Lower leg skin (tissue), 4 donors: ENCODE measurements at regions of chr1 and their contacts with region 1.

Region 1: DNA sequence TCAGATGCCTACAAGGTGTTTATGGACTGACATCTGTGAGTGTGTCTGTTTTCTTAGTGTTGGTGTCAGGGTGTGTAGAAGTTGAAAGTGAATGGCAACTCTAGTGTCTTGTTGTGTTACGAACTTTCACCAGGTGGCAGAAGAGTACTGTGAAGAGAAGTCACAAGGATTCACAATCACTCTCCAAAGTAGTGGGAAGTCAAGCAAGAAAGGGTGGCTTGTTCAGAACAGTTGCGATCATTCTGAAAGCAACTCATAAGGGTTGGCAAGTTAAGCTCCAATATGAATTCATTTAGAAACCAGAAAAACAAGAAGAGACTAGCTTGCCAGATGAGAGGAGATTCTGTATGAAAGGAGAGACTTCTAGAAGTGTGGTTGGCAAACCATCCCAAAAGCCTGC is 86.1 kb downstream of the FASLG start:
- DNase-seq: peak in 1 of 2 donors; percentile 45
- H3K4me3 ChIP-seq: no peak overlapping the region
- CTCF ChIP-seq: no peak
- POLR2A ChIP-seq: no peak

Region 2: GRCh38 chr1:173195596-173196088 is 450.6 kb after region 1 on chr1:
- intact Hi-C with region 1: loop called (anchors 5 kb)
- DNase-seq: no peak
- H3K4me3 ChIP-seq: no peak overlapping the region
- CTCF ChIP-seq: no peak
- POLR2A ChIP-seq: no peak